ENCODE measurements at regions of chr3 and their contacts with region 1.

Region 1: GRCh38 chr3:29291262-29291981 is 10.6 kb downstream of the RBMS3 start:
- DNase-seq: no peak
- ATAC-seq: peak; percentile 72 to 84 (median 82)
- H3K4me3 ChIP-seq: no peak overlapping the region
- H3K27ac ChIP-seq: peak overlapping the region; percentile 61
- H3K4me1 ChIP-seq: peaks cover 62% of the 10 kb centered on the region
- H3K27me3 ChIP-seq: no peaks in the 10 kb centered on the region
- CTCF ChIP-seq: no peak

Region 2: DNA sequence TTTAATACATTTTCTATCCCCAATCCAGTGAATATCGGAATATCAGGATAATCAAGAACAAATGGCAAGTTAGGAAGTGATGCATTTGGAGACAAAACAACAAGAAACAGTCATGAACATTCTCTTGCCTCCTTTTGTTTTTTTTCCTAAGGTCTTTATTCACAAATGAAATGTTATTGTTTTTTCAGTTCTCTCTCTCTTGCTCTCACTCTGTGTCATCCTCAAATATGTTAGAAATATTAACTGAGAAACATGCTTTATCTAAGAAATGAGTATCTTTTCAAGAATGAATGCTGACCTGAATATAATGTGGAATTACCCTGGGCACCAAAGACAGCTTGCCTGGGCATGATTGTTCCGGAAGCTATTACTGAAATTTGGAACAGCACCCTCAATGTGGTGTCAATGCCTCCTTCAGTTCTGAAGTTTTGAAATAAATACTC is 40.8 kb after region 1 on chr3:
- intact Hi-C with region 1: loop called in 1 of 2 experiments (anchors 5 kb)
- DNase-seq: no peak
- ATAC-seq: peak in 2 of 4 donors; percentile 31 to 37
- H3K4me3 ChIP-seq: peak overlapping the region; percentile 17
- H3K27ac ChIP-seq: peak overlapping the region; percentile 79
- H3K4me1 ChIP-seq: peaks cover 70% of the 10 kb centered on the region
- H3K27me3 ChIP-seq: no peaks in the 10 kb centered on the region
- CTCF ChIP-seq: no peak

Measured in psoas muscle (tissue), 8 donors.